ENCODE measurements at regions of chr12 and their contacts with region 1.

Region 1: DNA sequence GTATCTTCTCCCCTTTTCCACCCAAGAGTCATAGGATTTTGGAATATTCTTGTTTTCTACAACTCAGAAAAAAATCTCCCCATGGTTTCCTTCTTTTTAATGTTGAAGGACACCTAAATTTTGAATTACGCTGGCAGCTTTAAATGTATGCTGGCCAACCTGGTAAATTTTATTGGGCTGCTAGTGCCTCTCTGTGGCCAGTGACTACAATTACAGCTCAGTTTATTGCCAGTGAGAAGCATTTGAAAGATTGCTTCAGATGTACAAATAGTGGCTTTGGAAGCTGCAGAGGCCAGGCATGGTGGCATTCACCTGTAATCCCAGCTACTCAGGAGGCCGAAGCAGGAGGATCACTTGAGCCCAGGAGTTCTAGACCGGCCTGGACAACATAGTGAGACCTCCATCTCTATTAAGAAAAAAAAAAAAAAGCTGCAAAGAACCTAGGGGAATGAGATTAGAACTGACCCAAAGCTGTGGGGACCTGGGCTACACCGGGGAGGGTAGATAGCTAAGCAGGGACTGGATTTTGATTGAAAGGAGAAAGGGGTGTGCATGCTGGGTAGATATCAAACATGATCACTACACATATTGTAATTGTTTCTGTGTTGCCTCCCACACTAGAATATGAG is 7.6 kb upstream of the RAB21 start:
- DNase-seq: peak; percentile 55
- H3K4me3 Mint-ChIP-seq: no peak overlapping the region
- H3K27ac Mint-ChIP-seq: no peak overlapping the region
- H3K4me1 Mint-ChIP-seq: peaks cover 2% of the 10 kb centered on the region
- H3K27me3 Mint-ChIP-seq: peaks cover 1% of the 10 kb centered on the region

Region 2: DNA sequence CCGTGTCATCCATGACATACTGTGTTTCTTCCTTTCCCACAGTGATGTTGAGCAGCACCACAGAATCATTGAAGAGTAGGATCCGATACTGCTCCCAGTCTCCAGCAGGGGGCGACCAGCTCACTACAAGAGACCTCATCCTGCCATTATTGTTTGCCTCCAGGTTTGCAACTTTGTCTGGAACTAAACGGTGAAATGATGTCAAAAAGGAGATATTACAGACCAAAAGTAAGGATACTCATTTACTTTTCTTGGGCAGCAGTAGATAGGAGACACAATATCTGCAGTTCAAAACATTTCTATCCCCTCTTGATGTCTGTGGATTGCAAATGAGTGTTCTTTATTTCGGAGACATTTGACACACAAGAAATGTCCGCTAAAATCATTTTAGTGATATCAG is 1157.0 kb before region 1 on chr12:
- CTCF ChIA-PET with region 1: no interaction called
- POLR2A ChIA-PET with region 1: no interaction called
- intact Hi-C with region 1: loop called (anchors 5 kb)
- DNase-seq: peak; percentile 63
- H3K4me3 Mint-ChIP-seq: no peak overlapping the region
- H3K27ac Mint-ChIP-seq: no peak overlapping the region
- H3K4me1 Mint-ChIP-seq: no peaks in the 10 kb centered on the region
- H3K27me3 Mint-ChIP-seq: peaks cover 12% of the 10 kb centered on the region

Region 3: GRCh38 chr12:71392521-71393145 is 354.5 kb before region 1 on chr12:
- CTCF ChIA-PET with region 1: interaction called, 14 read pairs
- POLR2A ChIA-PET with region 1: no interaction called
- intact Hi-C with region 1: no loop called
- DNase-seq: no peak
- H3K4me3 Mint-ChIP-seq: no peak overlapping the region
- H3K27ac Mint-ChIP-seq: no peak overlapping the region
- H3K4me1 Mint-ChIP-seq: no peaks in the 10 kb centered on the region
- H3K27me3 Mint-ChIP-seq: peaks cover 6% of the 10 kb centered on the region

Region 4: DNA sequence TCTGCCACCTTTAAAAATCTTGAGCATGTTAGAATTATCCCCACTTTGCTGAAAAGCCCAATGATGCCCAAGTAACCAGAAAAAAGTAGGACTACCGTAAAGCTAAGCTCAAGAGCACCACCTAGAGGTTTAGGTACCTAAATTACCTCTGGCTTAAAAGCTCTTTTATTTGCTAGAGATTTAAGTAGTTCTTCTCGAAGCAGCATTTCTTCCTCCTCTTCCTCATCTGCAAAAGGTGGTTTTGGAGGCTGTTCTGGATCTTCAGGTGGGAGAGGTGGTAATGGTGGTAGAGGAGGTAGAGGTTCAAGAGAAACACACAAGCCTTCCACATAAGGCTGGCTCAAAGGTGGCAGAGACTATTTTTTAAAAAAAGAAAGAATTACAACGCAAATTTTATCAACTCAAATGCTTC is 110.4 kb before region 1 on chr12:
- CTCF ChIA-PET with region 1: interaction called, 37 read pairs
- POLR2A ChIA-PET with region 1: no interaction called
- intact Hi-C with region 1: loop called (anchors 1 kb)
- DNase-seq: no peak
- H3K4me3 Mint-ChIP-seq: no peak overlapping the region
- H3K27ac Mint-ChIP-seq: peak overlapping the region; percentile 46
- H3K4me1 Mint-ChIP-seq: peaks cover 28% of the 10 kb centered on the region
- H3K27me3 Mint-ChIP-seq: no peaks in the 10 kb centered on the region

Region 5: DNA sequence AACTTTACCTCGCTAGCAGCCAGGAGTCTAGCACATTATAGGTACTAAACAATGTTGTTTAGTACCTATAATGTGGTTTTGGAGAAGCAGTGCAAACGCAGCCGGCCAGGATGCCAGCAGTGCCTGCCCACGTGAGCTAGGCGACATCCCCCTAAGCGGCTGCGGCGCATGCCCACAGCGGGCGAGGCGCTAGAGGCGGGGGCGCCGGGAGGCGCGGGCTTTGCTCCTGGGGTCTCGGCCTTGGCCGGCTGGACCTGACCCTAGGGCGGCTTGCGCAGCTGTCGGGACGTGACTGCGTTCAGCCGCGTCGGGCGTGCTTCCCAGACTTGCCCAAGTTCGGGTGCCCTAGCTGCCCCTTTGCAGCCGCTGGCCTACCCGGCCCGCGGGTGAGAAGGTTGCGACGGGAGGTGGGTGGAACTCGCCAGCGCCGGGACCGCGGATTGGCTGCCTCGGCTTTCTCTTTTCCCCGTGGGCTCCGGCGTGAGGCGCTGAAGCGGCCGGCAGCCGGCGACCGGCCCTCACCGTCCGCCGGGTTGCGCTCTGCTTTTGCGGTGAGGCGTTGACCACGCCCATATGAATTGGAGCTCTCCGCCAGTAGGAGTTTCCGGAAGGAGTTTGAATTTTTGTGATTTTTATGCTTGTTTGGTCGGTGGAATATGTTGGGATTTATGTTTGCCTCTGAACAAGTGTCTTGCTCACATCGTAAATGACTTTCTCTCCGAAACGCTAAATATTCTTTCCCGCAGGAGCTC is 61.0 kb before region 1 on chr12 and contains the start of gene TMEM19:
- CTCF ChIA-PET with region 1: interaction called, 32 read pairs
- POLR2A ChIA-PET with region 1: no interaction called
- intact Hi-C with region 1: loop called (anchors 2 kb)
- DNase-seq: peak; percentile 87
- H3K4me3 Mint-ChIP-seq: peak within 1 kb of the TSS; percentile 96
- H3K27ac Mint-ChIP-seq: peak within 1 kb of the TSS; percentile 92
- H3K4me1 Mint-ChIP-seq: peaks cover 16% of the 10 kb centered on the region
- H3K27me3 Mint-ChIP-seq: no peaks in the 10 kb centered on the region
- total RNA-seq, gene TMEM19: 10.8 to 11.7 TPM

Region 6: DNA sequence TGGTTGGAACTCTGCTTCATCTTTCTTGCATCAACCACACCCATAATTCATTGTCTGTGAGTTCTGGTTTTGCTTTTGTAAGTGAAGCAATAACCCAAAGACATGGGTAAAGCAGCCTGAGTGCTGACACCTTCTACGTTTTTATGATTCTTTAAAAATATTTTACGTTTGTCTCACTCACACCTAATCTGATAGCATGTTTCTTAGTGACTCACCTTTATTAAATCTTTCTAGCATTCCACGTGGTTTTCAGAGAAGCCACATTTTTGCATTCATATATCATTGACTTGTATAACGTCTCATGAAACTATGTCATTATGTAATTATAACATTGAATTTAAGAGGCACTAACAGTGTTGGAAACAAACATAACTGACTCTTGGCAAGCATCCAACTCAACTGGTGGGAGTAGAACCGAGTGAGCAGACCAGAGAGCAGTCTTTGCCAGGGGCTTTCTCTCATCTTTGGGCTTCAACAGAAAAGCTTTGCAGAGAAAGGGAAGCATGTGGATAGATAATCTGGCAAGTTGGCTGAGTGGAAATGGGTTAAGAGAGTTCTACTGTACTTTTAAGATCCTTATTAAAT is 310.3 kb after region 1 on chr12:
- CTCF ChIA-PET with region 1: no interaction called
- POLR2A ChIA-PET with region 1: no interaction called
- intact Hi-C with region 1: no loop called
- DNase-seq: no peak
- H3K4me3 Mint-ChIP-seq: no peak overlapping the region
- H3K27ac Mint-ChIP-seq: no peak overlapping the region
- H3K4me1 Mint-ChIP-seq: no peaks in the 10 kb centered on the region
- H3K27me3 Mint-ChIP-seq: peaks cover 1% of the 10 kb centered on the region

Region 7: GRCh38 chr12:72602581-72602980 is 855.5 kb after region 1 on chr12:
- CTCF ChIA-PET with region 1: no interaction called
- POLR2A ChIA-PET with region 1: no interaction called
- intact Hi-C with region 1: no loop called
- DNase-seq: no peak
- H3K4me3 Mint-ChIP-seq: no peak overlapping the region
- H3K27ac Mint-ChIP-seq: no peak overlapping the region
- H3K4me1 Mint-ChIP-seq: no peaks in the 10 kb centered on the region
- H3K27me3 Mint-ChIP-seq: no peaks in the 10 kb centered on the region

Measured in activated CD4-positive, alpha-beta memory T cell treated with anti-CD3 and anti-CD28 coated beads for 36 hours (primary cell).